ENCODE measurements at regions of chr12 and their contacts with region 1.

Region 1: DNA sequence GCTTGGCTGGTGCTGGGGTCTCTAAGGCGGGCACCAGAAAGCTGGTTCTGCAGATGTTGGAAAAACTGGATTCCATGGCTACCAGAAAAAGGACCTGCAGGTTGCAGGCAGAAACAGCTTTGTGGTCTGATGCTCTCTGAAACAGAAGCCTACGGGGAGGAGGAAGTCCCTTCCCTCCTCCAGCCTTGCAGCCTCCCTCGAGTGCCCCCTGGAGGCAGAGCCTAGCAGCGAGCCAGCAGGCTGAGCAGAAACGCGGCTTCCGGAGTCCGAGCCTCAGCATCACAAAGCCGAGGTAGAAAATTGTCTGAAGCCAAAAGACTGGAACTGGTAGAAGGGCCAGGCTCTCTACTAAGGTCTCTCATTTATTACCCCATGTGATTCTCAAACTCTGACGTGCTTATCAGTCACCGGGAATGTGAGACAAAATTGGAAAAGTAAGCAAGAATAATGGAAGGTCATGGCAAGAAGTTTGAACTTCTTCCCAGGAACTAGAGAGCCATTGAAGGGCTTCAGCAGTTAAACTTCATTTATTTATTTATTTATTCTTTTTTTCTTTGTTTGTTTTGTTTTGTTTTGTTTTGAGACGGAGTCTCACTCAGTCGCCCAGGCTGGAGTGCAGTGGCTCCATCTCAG is 82.2 kb upstream of the CPSF6 start:
- DNase-seq: peak; percentile 78 to 83
- H3K4me3 ChIP-seq: no peak overlapping the region
- H3K4me3 Mint-ChIP-seq: no peak overlapping the region
- H3K27ac Mint-ChIP-seq: no peak overlapping the region
- H3K4me1 ChIP-seq: 0 out of 2 replicates have a peak, but pooled peaks cover under 1% of the 10 kb centered on the region
- H3K4me1 Mint-ChIP-seq: peaks cover 6% of the 10 kb centered on the region
- H3K27me3 ChIP-seq: no peaks in the 10 kb centered on the region
- H3K27me3 Mint-ChIP-seq: no peaks in the 10 kb centered on the region
- CTCF ChIP-seq: peak; percentile 82 to 91

Region 2: DNA sequence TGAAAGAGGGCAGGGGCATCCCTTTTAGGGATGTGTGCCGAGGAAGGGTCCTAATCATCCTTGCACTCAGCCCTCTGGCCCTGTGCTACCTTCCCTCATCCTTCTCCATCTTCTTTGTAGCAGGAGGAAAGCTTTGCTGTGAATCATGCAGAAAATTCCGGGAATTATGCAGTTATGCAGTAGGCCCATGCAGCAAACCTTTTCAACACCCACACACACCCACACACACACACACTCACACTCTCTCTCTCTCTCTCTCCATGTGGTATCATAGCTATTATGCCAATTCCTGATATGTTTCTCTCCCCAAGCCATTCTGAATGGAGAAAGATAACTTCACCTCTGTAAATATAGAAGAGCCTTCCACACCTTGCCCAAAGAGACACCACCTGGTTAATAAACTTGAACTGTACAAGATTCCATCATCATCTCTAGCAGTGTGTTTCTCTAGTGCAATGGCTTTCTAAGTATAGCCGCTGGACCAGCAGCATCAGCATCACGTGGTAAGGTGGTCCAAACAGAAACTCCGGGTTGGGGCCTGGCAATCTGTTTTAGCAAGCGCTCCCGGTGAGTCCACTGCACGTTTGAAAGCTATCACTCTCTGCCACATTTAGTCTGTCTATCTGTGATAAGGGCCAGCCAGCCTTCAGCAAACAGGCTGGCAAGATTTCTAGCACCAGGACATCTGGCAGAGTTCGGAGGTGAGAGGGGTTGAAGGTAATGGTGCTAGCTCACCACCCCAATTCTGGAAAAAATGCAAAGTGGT is 291.6 kb before region 1 on chr12:
- CTCF ChIA-PET with region 1: no interaction called
- POLR2A ChIA-PET with region 1: no interaction called
- intact Hi-C with region 1: loop called (anchors 2 kb)
- DNase-seq: no peak
- H3K4me3 ChIP-seq: no peak overlapping the region
- H3K4me3 Mint-ChIP-seq: no peak overlapping the region
- H3K27ac Mint-ChIP-seq: no peak overlapping the region
- H3K4me1 ChIP-seq: no peaks in the 10 kb centered on the region
- H3K4me1 Mint-ChIP-seq: no peaks in the 10 kb centered on the region
- H3K27me3 ChIP-seq: no peaks in the 10 kb centered on the region
- H3K27me3 Mint-ChIP-seq: no peaks in the 10 kb centered on the region
- CTCF ChIP-seq: no peak

Region 3: GRCh38 chr12:69254046-69254445 is 96.9 kb after region 1 on chr12:
- CTCF ChIA-PET with region 1: interaction called, 6 read pairs
- POLR2A ChIA-PET with region 1: no interaction called
- intact Hi-C with region 1: loop called (anchors 1 kb)
- DNase-seq: peak in 1 of 2 experiments; percentile 43
- H3K4me3 ChIP-seq: no peak overlapping the region
- H3K4me3 Mint-ChIP-seq: no peak overlapping the region
- H3K27ac Mint-ChIP-seq: no peak overlapping the region
- H3K4me1 ChIP-seq: no peaks in the 10 kb centered on the region
- H3K4me1 Mint-ChIP-seq: peaks cover 17% of the 10 kb centered on the region
- H3K27me3 ChIP-seq: no peaks in the 10 kb centered on the region
- H3K27me3 Mint-ChIP-seq: no peaks in the 10 kb centered on the region
- CTCF ChIP-seq: peak; percentile 55

Region 4: DNA sequence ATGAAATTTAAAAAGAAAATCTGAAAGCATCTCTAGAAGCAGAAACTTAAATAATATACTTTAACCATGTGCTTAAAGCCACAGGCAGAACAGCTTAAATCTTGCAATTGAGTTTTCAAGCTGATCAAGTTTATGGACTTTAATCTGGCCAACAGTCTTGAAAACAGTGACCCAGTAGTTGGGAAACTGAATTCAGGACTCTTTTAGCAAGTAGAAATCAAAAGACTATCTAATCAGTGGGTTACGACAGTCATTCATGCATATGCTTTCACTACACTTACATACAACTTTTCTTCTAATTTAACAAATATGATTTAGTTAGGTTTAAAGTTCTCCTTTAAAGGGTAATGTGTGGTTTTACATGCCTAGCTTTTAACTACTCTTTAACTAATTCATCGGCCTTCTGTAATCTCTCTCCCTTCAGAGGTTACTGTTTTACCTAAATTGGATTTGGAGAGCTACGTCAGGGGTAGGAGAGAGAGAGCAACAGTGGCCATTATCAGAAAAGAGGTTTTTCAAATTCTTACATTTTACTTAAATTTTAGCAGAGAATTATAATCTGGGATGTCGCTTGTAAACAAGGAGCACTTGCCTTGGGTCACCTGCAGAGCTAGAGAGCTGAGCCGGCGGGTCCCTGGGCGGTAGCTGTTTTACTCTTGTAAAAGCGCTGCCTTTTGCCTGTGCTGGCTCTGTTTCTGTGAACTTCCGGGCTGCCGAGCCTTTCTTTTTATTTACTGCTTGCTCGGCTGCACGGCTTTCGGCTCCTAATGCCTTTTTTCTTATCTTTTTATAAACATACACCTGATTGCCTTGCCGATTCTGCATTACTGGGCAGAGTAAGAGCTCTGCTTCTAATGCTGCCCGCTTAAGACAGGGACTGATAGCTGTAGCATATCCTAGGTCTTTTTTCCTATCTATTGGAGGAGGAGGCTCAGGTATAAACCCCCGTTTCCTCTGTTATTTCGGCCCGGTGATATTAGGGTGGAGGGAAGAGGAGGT is 173.6 kb after region 1 on chr12:
- CTCF ChIA-PET with region 1: interaction called, 3 read pairs
- POLR2A ChIA-PET with region 1: no interaction called
- intact Hi-C with region 1: loop called (anchors 10 kb)
- DNase-seq: peak; percentile 49 to 56
- H3K4me3 ChIP-seq: peak overlapping the region; percentile 60
- H3K4me3 Mint-ChIP-seq: peak overlapping the region; percentile 97
- H3K27ac Mint-ChIP-seq: peak overlapping the region; percentile 79
- H3K4me1 ChIP-seq: peaks cover 36% of the 10 kb centered on the region
- H3K4me1 Mint-ChIP-seq: peaks cover 40% of the 10 kb centered on the region
- H3K27me3 ChIP-seq: no peaks in the 10 kb centered on the region
- H3K27me3 Mint-ChIP-seq: no peaks in the 10 kb centered on the region
- CTCF ChIP-seq: no peak

Region 5: DNA sequence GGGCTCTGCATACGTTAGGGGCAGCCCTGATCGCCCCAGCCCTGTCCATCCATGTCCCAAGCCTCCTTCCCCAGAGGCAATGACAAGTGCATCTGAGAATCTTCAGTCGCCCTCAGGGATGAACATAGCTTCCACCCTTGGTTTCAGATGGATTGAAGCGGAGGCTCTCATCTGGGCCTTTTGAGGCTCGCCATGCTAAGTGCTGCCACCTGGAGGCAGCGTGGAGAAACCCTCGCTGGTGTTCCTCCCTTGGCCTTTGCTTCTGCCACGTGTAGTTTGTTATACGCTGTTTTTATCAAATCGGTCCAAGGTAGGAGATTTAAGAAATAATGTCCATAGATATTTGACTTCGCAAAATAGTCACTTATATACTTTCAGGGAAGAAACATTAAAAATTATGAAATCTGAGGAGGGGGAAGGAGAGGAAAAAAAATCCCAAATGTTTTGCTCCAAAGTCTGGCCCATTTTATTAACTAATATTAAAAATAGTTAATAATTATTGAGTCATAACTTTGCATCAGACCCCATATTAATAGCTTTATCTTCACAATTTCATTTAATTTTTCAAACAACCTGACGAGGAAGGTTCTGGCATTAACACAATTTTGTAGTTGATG is 482.4 kb after region 1 on chr12:
- CTCF ChIA-PET with region 1: interaction called, 5 read pairs
- POLR2A ChIA-PET with region 1: no interaction called
- intact Hi-C with region 1: loop called (anchors 10 kb)
- DNase-seq: peak; percentile 70 to 75
- H3K4me3 ChIP-seq: no peak overlapping the region
- H3K4me3 Mint-ChIP-seq: no peak overlapping the region
- H3K27ac Mint-ChIP-seq: no peak overlapping the region
- H3K4me1 ChIP-seq: no peaks in the 10 kb centered on the region
- H3K4me1 Mint-ChIP-seq: no peaks in the 10 kb centered on the region
- H3K27me3 ChIP-seq: no peaks in the 10 kb centered on the region
- H3K27me3 Mint-ChIP-seq: no peaks in the 10 kb centered on the region
- CTCF ChIP-seq: peak; percentile 81 to 89

Measured in Caco-2 (cell line).